ENCODE measurements at regions of chr6 and their contacts with region 1.

Region 1: GRCh38 chr6:152267967-152268845 is 369.0 kb downstream of the SYNE1 start:
- DNase-seq: peak in 1 of 2 experiments; percentile 51
- H3K4me3 ChIP-seq: no peak overlapping the region
- H3K4me3 Mint-ChIP-seq: no peak overlapping the region
- H3K27ac Mint-ChIP-seq: no peak overlapping the region
- H3K4me1 ChIP-seq: peaks cover 21% of the 10 kb centered on the region
- H3K4me1 Mint-ChIP-seq: peaks cover 14% of the 10 kb centered on the region
- H3K27me3 ChIP-seq: no peaks in the 10 kb centered on the region
- H3K27me3 Mint-ChIP-seq: no peaks in the 10 kb centered on the region
- CTCF ChIP-seq: peak; percentile 52 to 68

Region 2: DNA sequence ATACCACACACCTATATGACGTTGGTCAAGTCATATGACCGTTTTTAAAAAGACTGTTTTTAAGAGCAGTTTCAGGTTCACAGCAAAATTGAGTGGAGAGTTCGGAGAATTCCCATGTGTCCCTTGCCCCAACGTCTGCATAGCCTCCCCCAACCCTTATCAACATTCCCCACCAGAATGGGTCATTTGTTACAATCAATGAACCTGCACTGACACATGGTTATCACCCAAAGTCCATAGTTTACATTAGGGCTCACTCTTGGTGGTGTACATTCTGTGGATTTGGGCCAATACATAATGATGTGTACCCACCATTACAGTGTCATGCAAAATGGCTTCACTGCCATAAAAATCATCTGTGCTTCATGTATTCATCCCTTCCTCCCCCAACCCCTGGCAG is 928.8 kb before region 1 on chr6:
- CTCF ChIA-PET with region 1: no interaction called
- POLR2A ChIA-PET with region 1: no interaction called
- intact Hi-C with region 1: loop called (anchors 5 kb)
- DNase-seq: no peak
- H3K4me3 ChIP-seq: no peak overlapping the region
- H3K4me3 Mint-ChIP-seq: no peak overlapping the region
- H3K27ac Mint-ChIP-seq: no peak overlapping the region
- H3K4me1 ChIP-seq: no peaks in the 10 kb centered on the region
- H3K4me1 Mint-ChIP-seq: no peaks in the 10 kb centered on the region
- H3K27me3 ChIP-seq: no peaks in the 10 kb centered on the region
- H3K27me3 Mint-ChIP-seq: no peaks in the 10 kb centered on the region
- CTCF ChIP-seq: no peak

Region 3: GRCh38 chr6:151765444-151765886 is 502.7 kb before region 1 on chr6:
- CTCF ChIA-PET with region 1: interaction called, 5 read pairs
- POLR2A ChIA-PET with region 1: no interaction called
- intact Hi-C with region 1: loop called (anchors 1 kb)
- DNase-seq: peak; percentile 48 to 66
- H3K4me3 ChIP-seq: no peak overlapping the region
- H3K4me3 Mint-ChIP-seq: no peak overlapping the region
- H3K27ac Mint-ChIP-seq: no peak overlapping the region
- H3K4me1 ChIP-seq: peaks cover 3% of the 10 kb centered on the region; the same call in 1 of the 2 replicates
- H3K4me1 Mint-ChIP-seq: peaks cover 13% of the 10 kb centered on the region
- H3K27me3 ChIP-seq: no peaks in the 10 kb centered on the region
- H3K27me3 Mint-ChIP-seq: peaks cover 8% of the 10 kb centered on the region
- CTCF ChIP-seq: peak; percentile 61 to 69

Region 4: GRCh38 chr6:152124429-152125074 is 143.7 kb before region 1 on chr6:
- CTCF ChIA-PET with region 1: no interaction called
- POLR2A ChIA-PET with region 1: no interaction called
- intact Hi-C with region 1: loop called (anchors 2 kb)
- DNase-seq: peak in 1 of 2 experiments; percentile 13
- H3K4me3 ChIP-seq: no peak overlapping the region
- H3K4me3 Mint-ChIP-seq: no peak overlapping the region
- H3K27ac Mint-ChIP-seq: no peak overlapping the region
- H3K4me1 ChIP-seq: no peaks in the 10 kb centered on the region
- H3K4me1 Mint-ChIP-seq: no peaks in the 10 kb centered on the region
- H3K27me3 ChIP-seq: no peaks in the 10 kb centered on the region
- H3K27me3 Mint-ChIP-seq: no peaks in the 10 kb centered on the region
- CTCF ChIP-seq: peak; percentile 61 to 68

Region 5: GRCh38 chr6:152309648-152310047 is 41.4 kb after region 1 on chr6:
- CTCF ChIA-PET with region 1: interaction called, 3 read pairs
- POLR2A ChIA-PET with region 1: no interaction called
- intact Hi-C with region 1: loop called (anchors 2 kb)
- DNase-seq: no peak
- H3K4me3 ChIP-seq: no peak overlapping the region
- H3K4me3 Mint-ChIP-seq: no peak overlapping the region
- H3K27ac Mint-ChIP-seq: no peak overlapping the region
- H3K4me1 ChIP-seq: peaks cover 16% of the 10 kb centered on the region
- H3K4me1 Mint-ChIP-seq: peaks cover 18% of the 10 kb centered on the region
- H3K27me3 ChIP-seq: no peaks in the 10 kb centered on the region
- H3K27me3 Mint-ChIP-seq: no peaks in the 10 kb centered on the region
- CTCF ChIP-seq: no peak

Region 6: GRCh38 chr6:152478377-152479010 is 210.3 kb after region 1 on chr6:
- CTCF ChIA-PET with region 1: no interaction called
- POLR2A ChIA-PET with region 1: no interaction called
- intact Hi-C with region 1: no loop called
- DNase-seq: no peak
- H3K4me3 ChIP-seq: no peak overlapping the region
- H3K4me3 Mint-ChIP-seq: no peak overlapping the region
- H3K27ac Mint-ChIP-seq: no peak overlapping the region
- H3K4me1 ChIP-seq: no peaks in the 10 kb centered on the region
- H3K4me1 Mint-ChIP-seq: no peaks in the 10 kb centered on the region
- H3K27me3 ChIP-seq: no peaks in the 10 kb centered on the region; the same call in 1 of the 2 replicates
- H3K27me3 Mint-ChIP-seq: peaks cover 4% of the 10 kb centered on the region
- CTCF ChIP-seq: no peak